HCT116 (cell line): ENCODE measurements at regions of chr12 and their contacts with region 1.

Region 1: GRCh38 chr12:17866802-17867201 is 223.2 kb downstream of the RERGL start:
- DNase-seq: no peak
- ATAC-seq: no peak
- H3K4me3 ChIP-seq: no peak overlapping the region
- H3K27ac ChIP-seq: no peak overlapping the region
- H3K4me1 ChIP-seq: no peaks in the 10 kb centered on the region
- H3K27me3 ChIP-seq: no peaks in the 10 kb centered on the region
- CTCF ChIP-seq: no peak
- POLR2A ChIP-seq: no peak
- RAD21 ChIP-seq: no peak

Region 2: GRCh38 chr12:17778242-17778641 is 88.6 kb before region 1 on chr12:
- CTCF ChIA-PET with region 1: no interaction called
- POLR2A ChIA-PET with region 1: no interaction called
- RAD21 ChIA-PET with region 1: no interaction called
- intact Hi-C with region 1: loop called (anchors 2 kb)
- DNase-seq: no peak
- ATAC-seq: no peak
- H3K4me3 ChIP-seq: no peak overlapping the region
- H3K27ac ChIP-seq: no peak overlapping the region
- H3K4me1 ChIP-seq: no peaks in the 10 kb centered on the region
- H3K27me3 ChIP-seq: no peaks in the 10 kb centered on the region
- CTCF ChIP-seq: no peak
- POLR2A ChIP-seq: no peak
- RAD21 ChIP-seq: no peak